ENCODE measurements at regions of chrX and their contacts with region 1.

Region 1: GRCh38 chrX:95346856-95347255 is 1337.8 kb upstream of the DIAPH2 start:
- DNase-seq: no peak
- H3K4me3 ChIP-seq: no peak overlapping the region
- H3K4me3 Mint-ChIP-seq: no peak overlapping the region
- H3K27ac Mint-ChIP-seq: no peak overlapping the region
- H3K4me1 ChIP-seq: no peaks in the 10 kb centered on the region
- H3K4me1 Mint-ChIP-seq: no peaks in the 10 kb centered on the region
- H3K27me3 ChIP-seq: no peaks in the 10 kb centered on the region
- H3K27me3 Mint-ChIP-seq: peaks cover 2% of the 10 kb centered on the region
- CTCF ChIP-seq: peak in 1 of 2 experiments; percentile 13

Region 2: DNA sequence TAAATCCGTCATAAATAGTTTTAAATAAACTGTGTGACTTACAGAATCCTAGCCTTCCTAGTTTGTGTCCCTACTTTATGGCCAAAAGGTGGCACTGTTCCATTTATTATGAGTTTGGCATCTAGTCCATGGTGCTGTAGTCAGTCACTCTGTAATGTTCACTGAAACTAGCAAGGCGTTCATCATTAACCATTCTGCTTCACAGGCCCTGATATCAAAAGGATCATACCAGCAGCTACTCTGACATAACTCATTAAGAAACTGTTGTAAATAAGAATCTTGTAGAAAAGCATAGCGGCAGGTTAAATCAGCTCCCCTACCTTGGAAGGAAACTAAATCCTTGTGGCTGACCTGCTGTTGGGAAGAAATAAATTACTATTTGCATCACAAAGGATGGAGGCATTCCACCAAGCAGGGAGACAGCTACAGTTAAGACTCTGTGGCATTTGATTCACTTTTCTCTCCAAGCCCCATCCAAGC is 418.2 kb after region 1 on chrX:
- CTCF ChIA-PET with region 1: interaction called, 4 read pairs
- POLR2A ChIA-PET with region 1: no interaction called
- intact Hi-C with region 1: loop called (anchors 5 kb)
- DNase-seq: peak in 1 of 2 experiments; percentile 7
- H3K4me3 ChIP-seq: no peak overlapping the region
- H3K4me3 Mint-ChIP-seq: no peak overlapping the region
- H3K27ac Mint-ChIP-seq: no peak overlapping the region
- H3K4me1 ChIP-seq: no peaks in the 10 kb centered on the region
- H3K4me1 Mint-ChIP-seq: no peaks in the 10 kb centered on the region
- H3K27me3 ChIP-seq: no peaks in the 10 kb centered on the region
- H3K27me3 Mint-ChIP-seq: no peaks in the 10 kb centered on the region
- CTCF ChIP-seq: peak; percentile 42 to 43

Measured in Caco-2 (cell line).